ENCODE measurements at regions of chr2 and their contacts with region 1.

Region 1: DNA sequence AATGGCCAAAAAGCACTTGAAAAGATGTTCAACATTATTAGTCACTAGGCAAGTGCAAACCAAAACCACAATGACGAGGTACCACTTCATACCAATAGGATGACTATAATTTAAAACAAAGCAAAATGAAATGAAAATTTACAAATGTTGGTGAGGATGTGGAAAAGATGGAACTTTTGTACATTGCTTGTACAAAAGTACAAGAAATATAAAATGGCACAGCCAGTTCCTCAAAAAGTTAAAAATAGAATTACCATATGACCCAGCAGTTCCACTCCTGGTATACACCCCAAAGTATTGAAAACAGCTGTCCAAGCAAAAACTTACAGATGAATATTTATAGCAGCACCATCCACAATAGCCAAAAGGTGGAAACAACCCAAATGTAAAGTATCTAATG is 107.8 kb upstream of the XPO1 start:
- DNase-seq: peak; percentile 96
- ATAC-seq: peak; percentile 84
- H3K4me3 ChIP-seq: no peak overlapping the region
- H3K27ac ChIP-seq: peak overlapping the region; percentile 79; the same call in 1 of the 2 replicates
- H3K4me1 ChIP-seq: no peaks in the 10 kb centered on the region
- H3K27me3 ChIP-seq: no peaks in the 10 kb centered on the region
- CTCF ChIP-seq: no peak
- POLR2A ChIP-seq: no peak
- RAD21 ChIP-seq: no peak

Region 2: GRCh38 chr2:61620244-61621159 is 25.4 kb before region 1 on chr2:
- CTCF ChIA-PET with region 1: no interaction called
- POLR2A ChIA-PET with region 1: interaction called, 10 read pairs
- dilution Hi-C with region 1: no loop called
- in situ Hi-C with region 1: no loop called
- intact Hi-C with region 1: no loop called
- DNase-seq: peak; percentile 88
- ATAC-seq: peak; percentile 90
- H3K4me3 ChIP-seq: no peak overlapping the region
- H3K27ac ChIP-seq: no peak overlapping the region
- H3K4me1 ChIP-seq: 0 out of 2 replicates have a peak, but pooled peaks cover 2% of the 10 kb centered on the region
- H3K27me3 ChIP-seq: no peaks in the 10 kb centered on the region
- CTCF ChIP-seq: no peak
- POLR2A ChIP-seq: no peak
- RAD21 ChIP-seq: no peak